OCI-LY7 (cell line): ENCODE measurements at regions of chr1 and their contacts with region 1.

Region 1: GRCh38 chr1:199954699-199955098 is 72.8 kb upstream of the NR5A2 start:
- DNase-seq: peak; percentile 74
- H3K4me3 ChIP-seq: no peak overlapping the region
- H3K27ac ChIP-seq: no peak overlapping the region
- H3K4me1 ChIP-seq: peaks cover 13% of the 10 kb centered on the region
- CTCF ChIP-seq: peak; percentile 95

Region 2: GRCh38 chr1:199970125-199970524 is 15.4 kb after region 1 on chr1:
- CTCF ChIA-PET with region 1: no interaction called
- POLR2A ChIA-PET with region 1: interaction called, 16 read pairs
- intact Hi-C with region 1: no loop called
- DNase-seq: no peak
- H3K4me3 ChIP-seq: no peak overlapping the region
- H3K27ac ChIP-seq: no peak overlapping the region
- H3K4me1 ChIP-seq: peaks cover 1% of the 10 kb centered on the region
- CTCF ChIP-seq: no peak

Region 3: DNA sequence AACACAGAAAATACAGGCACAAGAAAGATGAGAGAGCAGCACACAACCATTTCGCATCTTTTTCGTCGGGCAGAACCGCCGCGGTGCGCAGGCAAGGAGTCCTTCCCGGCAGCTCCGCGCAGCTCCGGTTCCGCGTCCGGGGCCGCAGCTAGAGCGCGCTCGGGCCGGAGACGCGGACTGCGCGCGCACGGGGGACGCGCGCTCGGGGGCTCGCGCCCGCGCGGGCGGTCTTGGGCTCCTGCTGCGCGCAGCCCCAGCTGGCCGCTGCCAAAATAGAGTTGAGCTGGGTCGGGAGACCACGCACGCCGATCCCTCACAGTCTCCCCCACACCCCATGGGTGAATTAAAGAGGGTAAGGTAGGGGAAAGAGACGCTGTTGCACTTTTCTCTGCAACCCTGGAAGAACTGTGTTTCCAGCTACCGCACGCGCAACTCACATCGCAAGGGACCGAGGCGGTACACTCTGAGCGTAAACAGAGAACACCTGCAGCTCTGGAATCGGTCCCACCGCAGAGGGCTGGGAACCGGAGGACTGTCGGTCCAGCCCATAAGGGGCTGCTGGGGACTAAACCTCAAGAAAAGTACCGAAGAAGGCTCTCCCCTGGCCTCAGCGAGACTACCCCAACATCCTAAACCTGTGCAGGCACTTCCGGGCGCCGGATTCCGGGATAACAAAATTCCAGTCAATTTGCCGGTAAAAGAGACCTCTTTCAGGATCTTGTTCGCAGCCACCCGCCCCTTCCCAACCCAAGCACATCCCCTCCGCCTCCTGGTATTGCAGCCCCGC is 74.5 kb after region 1 on chr1:
- CTCF ChIA-PET with region 1: interaction called, 3 read pairs
- POLR2A ChIA-PET with region 1: interaction called, 11 read pairs
- intact Hi-C with region 1: loop called (anchors 5 kb)
- DNase-seq: peak; percentile 88
- H3K4me3 ChIP-seq: peak overlapping the region; percentile 73
- H3K27ac ChIP-seq: peak overlapping the region; percentile 13
- H3K4me1 ChIP-seq: peaks cover 32% of the 10 kb centered on the region
- CTCF ChIP-seq: no peak

Region 4: DNA sequence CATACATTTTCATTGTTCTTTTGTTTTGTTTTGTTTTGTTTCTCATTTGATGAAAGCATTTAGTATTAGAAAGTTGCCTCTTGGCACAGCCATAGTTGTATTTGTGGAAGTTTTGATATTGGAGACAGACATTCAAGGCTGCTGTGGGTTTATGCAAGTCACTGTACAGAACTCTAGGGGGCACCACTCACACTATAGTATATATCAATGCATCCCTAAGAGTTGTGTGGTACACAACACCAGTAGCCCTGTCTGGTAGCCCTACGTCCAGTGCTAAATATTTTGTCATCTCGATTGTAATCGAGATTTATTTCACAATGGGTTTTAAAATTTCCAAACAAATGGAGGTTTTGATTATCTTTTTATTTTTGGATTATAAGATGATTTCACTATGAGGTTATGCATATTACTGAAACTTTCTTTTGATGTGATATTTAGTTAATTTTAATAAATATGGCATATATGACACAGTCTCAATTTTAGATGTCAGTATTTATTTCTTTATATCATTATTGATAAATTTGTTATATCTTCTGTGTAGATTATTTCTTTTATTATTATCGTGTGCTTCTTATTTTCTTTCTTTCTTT is 185.1 kb after region 1 on chr1:
- CTCF ChIA-PET with region 1: no interaction called
- POLR2A ChIA-PET with region 1: no interaction called
- intact Hi-C with region 1: loop called (anchors 5 kb)
- DNase-seq: peak; percentile 82
- H3K4me3 ChIP-seq: no peak overlapping the region
- H3K27ac ChIP-seq: no peak overlapping the region
- H3K4me1 ChIP-seq: peaks cover 8% of the 10 kb centered on the region
- CTCF ChIP-seq: peak; percentile 97

Region 5: GRCh38 chr1:200279810-200280411 is 325.2 kb after region 1 on chr1:
- CTCF ChIA-PET with region 1: no interaction called
- POLR2A ChIA-PET with region 1: interaction called, 3 read pairs
- intact Hi-C with region 1: loop called (anchors 5 kb)
- DNase-seq: peak; percentile 46
- H3K4me3 ChIP-seq: no peak overlapping the region
- H3K27ac ChIP-seq: no peak overlapping the region
- H3K4me1 ChIP-seq: peaks cover 9% of the 10 kb centered on the region
- CTCF ChIP-seq: peak; percentile 82

Region 6: DNA sequence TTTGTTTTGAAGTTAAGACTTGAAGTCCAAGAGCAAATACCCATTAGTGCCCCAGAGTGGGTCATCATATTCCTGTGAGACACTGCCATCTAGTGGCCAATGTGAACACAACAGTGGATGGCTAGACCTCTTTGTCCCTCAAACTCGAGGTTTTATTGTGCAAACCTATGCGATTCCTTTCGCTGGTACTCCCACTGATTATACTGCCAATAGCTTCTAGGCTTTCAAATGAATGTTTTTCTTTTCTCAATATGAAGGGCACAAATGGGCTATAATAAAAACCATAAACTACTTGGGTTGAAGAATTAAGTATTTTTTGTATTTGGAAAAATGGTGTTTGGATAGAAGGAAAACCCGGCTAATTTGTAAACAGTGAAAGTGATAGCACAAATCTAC is 555.5 kb after region 1 on chr1:
- CTCF ChIA-PET with region 1: no interaction called
- POLR2A ChIA-PET with region 1: no interaction called
- intact Hi-C with region 1: loop called (anchors 2 kb)
- DNase-seq: peak; percentile 82
- H3K4me3 ChIP-seq: no peak overlapping the region
- H3K27ac ChIP-seq: no peak overlapping the region
- H3K4me1 ChIP-seq: no peaks in the 10 kb centered on the region
- CTCF ChIP-seq: peak; percentile 99